HCT116 (cell line): ENCODE measurements at regions of chr9 and their contacts with region 1.

Region 1: DNA sequence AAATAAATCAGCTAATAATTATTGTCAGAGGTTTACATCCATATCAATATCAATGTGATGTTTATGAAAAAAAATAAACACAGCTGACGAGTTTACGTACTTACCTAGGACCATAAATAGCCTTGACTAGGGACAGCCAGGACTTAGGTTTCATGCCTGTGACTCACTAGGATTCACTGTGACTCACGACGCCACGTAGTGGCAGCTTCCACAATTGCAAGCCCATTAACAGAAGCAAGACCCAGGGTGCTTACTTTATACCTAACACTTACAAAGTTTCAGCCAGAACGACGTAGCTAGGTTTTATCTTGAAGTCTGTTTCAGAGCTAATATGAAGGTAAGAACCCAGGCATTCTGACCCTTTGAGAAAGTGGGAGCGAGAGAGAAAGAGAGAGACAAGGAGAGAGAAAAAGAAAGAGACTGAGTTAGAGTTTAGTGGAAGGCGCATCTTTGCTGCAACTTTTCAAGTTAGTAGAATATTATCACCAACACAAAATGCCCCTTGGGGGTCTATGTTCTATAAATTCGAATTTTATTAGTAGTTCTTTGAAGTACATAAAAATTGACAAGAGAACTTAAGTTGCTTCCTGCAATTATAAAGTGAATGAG is 191.2 kb downstream of the GNA14 start:
- DNase-seq: peak; percentile 89
- ATAC-seq: peak; percentile 78
- H3K4me3 ChIP-seq: no peak overlapping the region
- H3K27ac ChIP-seq: no peak overlapping the region
- H3K4me1 ChIP-seq: peaks cover 0 to 10% of the 10 kb centered on the region in 2 experiments; a peak in 2 of 4 replicates
- H3K27me3 ChIP-seq: no peaks in the 10 kb centered on the region
- CTCF ChIP-seq: peak; percentile 59 to 91 (median 87)
- POLR2A ChIP-seq: no peak
- RAD21 ChIP-seq: peak; percentile 47

Region 2: GRCh38 chr9:77375956-77376532 is 80.9 kb before region 1 on chr9:
- CTCF ChIA-PET with region 1: no interaction called
- POLR2A ChIA-PET with region 1: no interaction called
- RAD21 ChIA-PET with region 1: no interaction called
- intact Hi-C with region 1: no loop called
- DNase-seq: no peak
- ATAC-seq: no peak
- H3K4me3 ChIP-seq: no peak overlapping the region
- H3K27ac ChIP-seq: no peak overlapping the region
- H3K4me1 ChIP-seq: no peaks in the 10 kb centered on the region
- H3K27me3 ChIP-seq: no peaks in the 10 kb centered on the region
- CTCF ChIP-seq: no peak
- POLR2A ChIP-seq: no peak
- RAD21 ChIP-seq: no peak

Region 3: DNA sequence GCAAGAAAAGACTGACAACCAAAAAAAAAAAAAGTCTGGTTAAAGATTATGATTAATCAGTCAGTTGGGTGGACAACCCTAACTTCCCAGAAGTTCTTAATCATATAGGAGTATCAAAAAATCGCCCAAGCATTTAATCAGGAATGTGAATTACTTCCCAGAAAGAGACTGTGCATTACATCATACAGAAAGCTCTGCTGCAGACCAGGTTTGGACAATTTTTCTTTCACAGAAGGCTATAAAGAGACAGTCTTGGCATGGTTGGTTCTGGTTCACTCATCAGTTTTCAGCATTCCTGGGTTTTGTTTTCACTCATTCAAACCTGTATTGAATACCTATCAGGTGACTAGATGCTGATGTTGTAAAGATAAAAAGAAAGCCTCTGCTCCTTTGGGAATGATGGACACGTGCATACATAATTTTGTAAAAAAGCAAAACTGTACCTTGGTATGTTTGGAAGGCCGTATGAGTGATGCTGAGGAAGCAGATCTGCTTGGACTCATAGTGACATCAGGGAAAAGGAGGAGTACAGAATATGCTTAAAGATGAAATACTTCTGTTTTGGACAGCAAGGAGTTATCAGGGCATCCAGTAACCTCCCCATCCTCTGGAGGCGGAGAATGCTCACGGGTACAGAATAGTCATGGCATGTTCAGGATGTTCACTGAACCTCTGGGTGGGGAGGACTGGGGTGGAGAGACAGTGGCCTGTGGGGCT is 12.7 kb after region 1 on chr9:
- CTCF ChIA-PET with region 1: interaction called, 18 read pairs
- POLR2A ChIA-PET with region 1: no interaction called
- RAD21 ChIA-PET with region 1: no interaction called
- intact Hi-C with region 1: no loop called
- DNase-seq: no peak
- ATAC-seq: no peak
- H3K4me3 ChIP-seq: no peak overlapping the region
- H3K27ac ChIP-seq: no peak overlapping the region
- H3K4me1 ChIP-seq: no peaks in the 10 kb centered on the region; a peak in 1 of 4 replicates
- H3K27me3 ChIP-seq: no peaks in the 10 kb centered on the region
- CTCF ChIP-seq: no peak
- POLR2A ChIP-seq: no peak
- RAD21 ChIP-seq: no peak

Region 4: DNA sequence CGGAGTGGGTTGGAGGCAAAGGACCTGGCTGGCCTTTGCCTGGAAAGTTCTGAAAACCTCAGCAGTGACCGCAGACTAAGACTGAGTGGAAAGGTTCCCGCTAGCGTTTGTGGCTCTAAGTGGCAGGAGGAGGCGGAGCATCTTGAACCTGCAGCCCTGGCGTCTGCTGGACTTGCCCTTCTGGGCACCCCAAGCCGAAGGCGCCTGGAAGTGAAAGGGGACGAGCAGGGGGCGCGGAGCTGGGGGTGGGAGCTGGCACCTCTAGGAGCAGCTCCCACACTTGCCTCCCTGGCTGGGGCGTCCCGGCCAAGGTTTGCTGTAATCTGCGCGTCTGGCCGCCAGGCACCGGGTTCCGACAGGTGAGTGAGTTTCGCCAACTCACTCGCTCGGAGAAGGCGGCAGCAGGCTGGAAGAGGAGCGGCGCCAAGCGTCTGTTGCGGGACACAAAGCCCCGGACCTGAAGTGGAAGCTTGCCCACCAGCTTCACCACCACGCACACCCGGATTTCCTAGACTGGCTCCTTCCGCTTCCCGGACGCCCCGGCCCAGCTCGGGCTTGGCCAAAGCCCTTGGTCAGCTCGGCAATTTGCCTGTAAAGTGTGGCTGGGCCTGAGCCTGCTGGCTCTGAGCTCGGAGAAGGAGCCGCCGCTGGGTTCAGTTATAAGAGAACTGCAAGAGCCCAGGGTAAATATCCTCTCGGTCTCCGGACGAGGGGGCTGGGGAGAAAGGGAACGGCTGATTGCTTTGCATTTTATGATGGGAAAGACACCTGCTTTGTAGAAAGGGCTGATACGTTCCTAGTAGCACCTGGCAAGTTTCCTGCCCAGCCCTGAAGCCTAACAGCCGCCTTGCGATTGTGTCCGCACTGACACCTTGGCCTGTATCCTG is 191.5 kb after region 1 on chr9 and contains the start of gene GNA14:
- CTCF ChIA-PET with region 1: interaction called, 6 read pairs
- POLR2A ChIA-PET with region 1: no interaction called
- RAD21 ChIA-PET with region 1: no interaction called
- intact Hi-C with region 1: loop called (anchors 5 kb)
- DNase-seq: no peak
- ATAC-seq: no peak
- H3K4me3 ChIP-seq: no peak within 1 kb of the TSS
- H3K27ac ChIP-seq: no peak within 1 kb of the TSS
- H3K4me1 ChIP-seq: no peaks in the 10 kb centered on the region
- H3K27me3 ChIP-seq: no peaks in the 10 kb centered on the region
- CTCF ChIP-seq: no peak
- POLR2A ChIP-seq: no peak
- RAD21 ChIP-seq: no peak
- total RNA-seq, gene GNA14: 0.25 TPM

Region 5: DNA sequence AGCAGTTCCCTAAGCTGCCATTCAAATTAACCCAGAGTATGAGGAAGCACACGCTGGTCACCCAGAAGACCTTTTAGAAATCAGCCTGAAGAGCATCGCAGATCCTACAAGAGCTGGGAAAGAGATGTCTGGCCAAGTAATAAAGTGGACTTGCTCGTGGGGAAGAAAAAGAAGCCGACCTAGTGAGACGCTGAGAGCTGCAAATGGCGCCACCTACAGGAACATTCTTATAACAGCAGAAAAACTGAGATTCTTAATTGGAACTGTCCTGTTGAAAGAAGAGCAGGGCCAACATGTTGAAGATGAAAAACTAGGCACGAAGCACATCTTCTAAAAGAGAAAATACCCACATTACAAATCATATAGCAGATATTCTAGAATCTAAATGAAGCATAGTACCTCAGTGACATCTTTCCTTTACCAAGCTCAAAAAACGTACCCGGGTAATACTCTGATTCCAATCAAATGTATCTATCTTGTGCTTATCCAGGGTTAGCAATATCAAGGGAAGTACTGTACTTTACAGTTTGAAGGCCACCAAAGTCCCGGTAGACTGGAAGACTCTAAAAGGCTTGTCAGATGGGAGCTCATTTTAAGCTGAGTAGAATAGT is 578.6 kb after region 1 on chr9:
- CTCF ChIA-PET with region 1: interaction called, 5 read pairs
- POLR2A ChIA-PET with region 1: no interaction called
- RAD21 ChIA-PET with region 1: no interaction called
- intact Hi-C with region 1: loop called (anchors 10 kb)
- DNase-seq: peak; percentile 65
- ATAC-seq: no peak
- H3K4me3 ChIP-seq: 0 out of 4 replicates have a peak overlapping the region, but pooled peaks of 1 of the 2 experiments have one; percentile 4
- H3K27ac ChIP-seq: no peak overlapping the region
- H3K4me1 ChIP-seq: peaks cover 8 to 16% of the 10 kb centered on the region in 2 experiments; a peak in 3 of 4 replicates
- H3K27me3 ChIP-seq: no peaks in the 10 kb centered on the region
- CTCF ChIP-seq: peak; percentile 73 to 79 (median 78)
- POLR2A ChIP-seq: no peak
- RAD21 ChIP-seq: peak; percentile 87